K562 (cell line): ENCODE measurements at regions of chr16 and their contacts with region 1.

Region 1: GRCh38 chr16:89720813-89721545 is at the starts of genes VPS9D1 and ZNF276:
- DNase-seq: peak; percentile 81 to 90 (median 84)
- ATAC-seq: peak; percentile 67
- H3K4me3 ChIP-seq: peak within 1 kb of the TSS; percentile 98
- H3K27ac ChIP-seq: peak within 1 kb of the TSS; percentile 88
- H3K4me1 ChIP-seq: peaks cover 40 to 76% of the 10 kb centered on the region in 2 experiments
- H3K27me3 ChIP-seq: no peaks in the 10 kb centered on the region
- CTCF ChIP-seq: no peak
- EP300 ChIP-seq: no peak
- POLR2A ChIP-seq: peak; percentile 52
- RAD21 ChIP-seq: no peak
- polyA plus RNA-seq, gene VPS9D1: 1.0 to 1.4 TPM
- polyA plus RNA-seq, gene ZNF276: 0.49 to 0.80 TPM

Region 2: DNA sequence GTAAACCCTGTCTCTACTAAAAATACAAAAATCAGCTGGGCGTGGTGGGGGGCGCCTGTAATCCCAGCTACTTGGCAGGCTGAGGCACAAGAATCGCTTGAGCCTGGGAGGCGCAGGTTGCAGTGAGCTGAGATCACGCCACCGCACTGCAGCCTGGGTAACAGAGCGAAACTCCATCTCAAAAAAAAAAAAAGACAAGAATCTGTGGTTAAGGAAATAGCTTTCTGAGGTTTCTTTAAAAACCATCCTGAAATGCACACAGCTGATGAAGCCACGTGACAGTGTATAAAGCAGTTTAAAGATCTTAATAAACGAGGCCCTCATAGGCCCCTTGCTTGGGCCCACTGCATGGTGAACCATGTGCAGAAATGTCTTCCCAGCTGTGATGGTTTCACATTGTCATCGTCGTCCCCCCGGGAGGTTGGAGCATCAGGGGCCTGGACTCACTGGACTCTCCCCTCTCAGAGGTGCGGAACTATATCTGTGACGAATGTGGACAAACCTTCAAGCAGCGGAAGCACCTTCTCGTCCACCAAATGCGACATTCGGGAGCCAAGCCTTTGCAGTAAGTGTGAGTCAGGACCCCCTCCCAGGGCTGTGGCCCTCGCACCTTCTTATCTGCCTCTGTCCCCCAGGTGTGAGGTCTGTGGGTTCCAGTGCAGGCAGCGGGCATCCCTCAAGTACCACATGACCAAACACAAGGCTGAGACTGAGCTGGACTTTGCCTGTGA is 16.5 kb after region 1 on chr16:
- CTCF ChIA-PET with region 1: no interaction called
- POLR2A ChIA-PET with region 1: interaction called, 37 read pairs
- in situ Hi-C with region 1: no loop called
- intact Hi-C with region 1: no loop called
- DNase-seq: no peak
- ATAC-seq: no peak; the same call in 2 of the 3 replicates
- H3K4me3 ChIP-seq: no peak overlapping the region
- H3K27ac ChIP-seq: no peak overlapping the region
- H3K4me1 ChIP-seq: peaks cover 0 to 11% of the 10 kb centered on the region in 2 experiments; a peak in 1 of 5 replicates
- H3K27me3 ChIP-seq: no peaks in the 10 kb centered on the region
- CTCF ChIP-seq: no peak
- EP300 ChIP-seq: no peak
- POLR2A ChIP-seq: no peak; the same call in none of the 2 replicates
- RAD21 ChIP-seq: no peak